ENCODE measurements at regions of chr1 and their contacts with region 1.

Region 1: GRCh38 chr1:159891275-159892157 is 8.4 kb downstream of the CFAP45 start:
- DNase-seq: peak; percentile 53 to 76 (median 65)
- ATAC-seq: peak; percentile 96
- H3K4me3 ChIP-seq: no peak overlapping the region
- H3K4me3 Mint-ChIP-seq: no peak overlapping the region
- H3K27ac ChIP-seq: no peak overlapping the region
- H3K27ac Mint-ChIP-seq: peak overlapping the region in 1 of 9 donors; percentile 37
- H3K4me1 ChIP-seq: peaks cover 0 to 17% of the 10 kb centered on the region in 2 donors
- H3K4me1 Mint-ChIP-seq: peaks cover 0 to 19% (median 0%) of the 10 kb centered on the region in 7 donors
- H3K27me3 ChIP-seq: no peaks in the 10 kb centered on the region
- H3K27me3 Mint-ChIP-seq: peaks cover 0 to 24% (median 0%) of the 10 kb centered on the region in 5 donors

Region 2: GRCh38 chr1:159161001-159161718 is 730.4 kb before region 1 on chr1:
- CTCF ChIA-PET with region 1: no interaction called
- POLR2A ChIA-PET with region 1: no interaction called
- intact Hi-C with region 1: loop called (anchors 1 to 5 kb)
- DNase-seq: peak; percentile 15 to 63 (median 40)
- ATAC-seq: peak; percentile 93
- H3K4me3 ChIP-seq: no peak overlapping the region
- H3K4me3 Mint-ChIP-seq: peak overlapping the region in 2 of 10 donors; percentile 2 to 5
- H3K27ac ChIP-seq: no peak overlapping the region
- H3K27ac Mint-ChIP-seq: no peak overlapping the region
- H3K4me1 ChIP-seq: no peaks in the 10 kb centered on the region
- H3K4me1 Mint-ChIP-seq: peaks cover 0 to 8% (median 2%) of the 10 kb centered on the region in 7 donors
- H3K27me3 ChIP-seq: peaks cover 3 to 4% of the 10 kb centered on the region in 2 donors
- H3K27me3 Mint-ChIP-seq: peaks cover 35 to 71% (median 48%) of the 10 kb centered on the region in 5 donors

Region 3: DNA sequence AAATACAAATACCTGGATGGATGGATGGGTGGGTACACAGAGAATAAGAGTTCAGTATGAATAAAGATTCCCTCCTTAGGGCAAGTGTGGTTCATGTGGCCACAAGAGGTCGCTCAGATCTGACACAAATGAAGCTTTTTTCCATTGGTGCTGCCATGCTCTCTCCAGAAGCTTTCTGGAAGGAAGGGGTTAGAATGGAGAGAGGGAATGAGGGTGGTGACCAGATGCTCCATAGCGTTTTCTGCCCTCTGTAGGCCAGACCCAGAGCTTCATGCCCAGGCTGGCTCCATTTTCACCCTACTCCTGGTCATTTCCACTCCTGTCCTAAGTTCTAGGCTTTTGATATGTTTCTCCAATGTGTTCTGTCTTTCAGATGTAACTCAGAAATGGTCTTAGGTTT is 92.6 kb before region 1 on chr1:
- CTCF ChIA-PET with region 1: interaction called, 226 read pairs
- POLR2A ChIA-PET with region 1: interaction called, 4 read pairs
- intact Hi-C with region 1: loop called (anchors 1 kb)
- DNase-seq: peak in 8 of 9 donors; percentile 11 to 52 (median 34)
- ATAC-seq: peak; percentile 66
- H3K4me3 ChIP-seq: no peak overlapping the region
- H3K4me3 Mint-ChIP-seq: no peak overlapping the region
- H3K27ac ChIP-seq: no peak overlapping the region
- H3K27ac Mint-ChIP-seq: no peak overlapping the region
- H3K4me1 ChIP-seq: peaks cover 8 to 48% of the 10 kb centered on the region in 2 donors
- H3K4me1 Mint-ChIP-seq: peaks cover 13 to 24% (median 16%) of the 10 kb centered on the region in 7 donors
- H3K27me3 ChIP-seq: no peaks in the 10 kb centered on the region
- H3K27me3 Mint-ChIP-seq: peaks cover 0 to 55% (median 3%) of the 10 kb centered on the region in 5 donors

Region 4: GRCh38 chr1:159854693-159855192 is 36.8 kb before region 1 on chr1:
- CTCF ChIA-PET with region 1: interaction called, 5 read pairs
- POLR2A ChIA-PET with region 1: interaction called, 3 read pairs
- intact Hi-C with region 1: loop called in 1 of 2 experiments (anchors 1 kb)
- DNase-seq: peak; percentile 53 to 72 (median 70)
- ATAC-seq: peak; percentile 91
- H3K4me3 ChIP-seq: peak overlapping the region; percentile 69
- H3K4me3 Mint-ChIP-seq: peak overlapping the region; percentile 80 to 96 (median 91)
- H3K27ac ChIP-seq: peak overlapping the region; percentile 75
- H3K27ac Mint-ChIP-seq: peak overlapping the region in 8 of 9 donors; percentile 67 to 94 (median 88)
- H3K4me1 ChIP-seq: peaks cover 0 to 3% of the 10 kb centered on the region in 2 donors
- H3K4me1 Mint-ChIP-seq: peaks cover 14 to 37% (median 23%) of the 10 kb centered on the region in 7 donors
- H3K27me3 ChIP-seq: no peaks in the 10 kb centered on the region
- H3K27me3 Mint-ChIP-seq: peaks cover 0 to 32% (median 0%) of the 10 kb centered on the region in 5 donors

Region 5: GRCh38 chr1:159945483-159946241 is 54.1 kb after region 1 on chr1 and contains the start of gene IGSF9:
- CTCF ChIA-PET with region 1: interaction called, 9 read pairs
- POLR2A ChIA-PET with region 1: interaction called, 4 read pairs
- intact Hi-C with region 1: loop called in 1 of 2 experiments (anchors 1 kb)
- DNase-seq: peak in 8 of 9 donors; percentile 60 to 84 (median 76)
- ATAC-seq: peak; percentile 95
- H3K4me3 ChIP-seq: peak within 1 kb of the TSS; percentile 57
- H3K4me3 Mint-ChIP-seq: peak within 1 kb of the TSS; percentile 50 to 79 (median 72)
- H3K27ac ChIP-seq: no peak within 1 kb of the TSS
- H3K27ac Mint-ChIP-seq: peak within 1 kb of the TSS in 3 of 9 donors; percentile 9 to 69 (median 17)
- H3K4me1 ChIP-seq: peaks cover 4 to 7% of the 10 kb centered on the region in 2 donors
- H3K4me1 Mint-ChIP-seq: peaks cover 8 to 18% (median 14%) of the 10 kb centered on the region in 7 donors
- H3K27me3 ChIP-seq: peaks cover 8 to 11% of the 10 kb centered on the region in 2 donors
- H3K27me3 Mint-ChIP-seq: peaks cover 23 to 73% (median 30%) of the 10 kb centered on the region in 5 donors
- total RNA-seq, gene IGSF9: 0.12 TPM in 1 of 5 experiments, not detected in the others

Measured in naive thymus-derived CD4-positive, alpha-beta T cell (primary cell).